Sigmoid colon (tissue), 7 donors: ENCODE measurements at regions of chr1 and their contacts with region 1.

Region 1: GRCh38 chr1:166975361-166976129 is at the start of gene ILDR2:
- DNase-seq: peak; percentile 81
- H3K4me3 ChIP-seq: peak within 1 kb of the TSS; percentile 70 to 86 (median 82)
- H3K27ac ChIP-seq: peak within 1 kb of the TSS; percentile 81 to 88 (median 86)
- H3K4me1 ChIP-seq: peaks cover 0 to 26% (median 15%) of the 10 kb centered on the region in 4 donors
- H3K27me3 ChIP-seq: no peaks in the 10 kb centered on the region
- CTCF ChIP-seq: no peak
- EP300 ChIP-seq: no peak
- POLR2A ChIP-seq: no peak
- total RNA-seq, gene ILDR2: 7.1 to 15.8 (median 8.4) TPM

Region 2: DNA sequence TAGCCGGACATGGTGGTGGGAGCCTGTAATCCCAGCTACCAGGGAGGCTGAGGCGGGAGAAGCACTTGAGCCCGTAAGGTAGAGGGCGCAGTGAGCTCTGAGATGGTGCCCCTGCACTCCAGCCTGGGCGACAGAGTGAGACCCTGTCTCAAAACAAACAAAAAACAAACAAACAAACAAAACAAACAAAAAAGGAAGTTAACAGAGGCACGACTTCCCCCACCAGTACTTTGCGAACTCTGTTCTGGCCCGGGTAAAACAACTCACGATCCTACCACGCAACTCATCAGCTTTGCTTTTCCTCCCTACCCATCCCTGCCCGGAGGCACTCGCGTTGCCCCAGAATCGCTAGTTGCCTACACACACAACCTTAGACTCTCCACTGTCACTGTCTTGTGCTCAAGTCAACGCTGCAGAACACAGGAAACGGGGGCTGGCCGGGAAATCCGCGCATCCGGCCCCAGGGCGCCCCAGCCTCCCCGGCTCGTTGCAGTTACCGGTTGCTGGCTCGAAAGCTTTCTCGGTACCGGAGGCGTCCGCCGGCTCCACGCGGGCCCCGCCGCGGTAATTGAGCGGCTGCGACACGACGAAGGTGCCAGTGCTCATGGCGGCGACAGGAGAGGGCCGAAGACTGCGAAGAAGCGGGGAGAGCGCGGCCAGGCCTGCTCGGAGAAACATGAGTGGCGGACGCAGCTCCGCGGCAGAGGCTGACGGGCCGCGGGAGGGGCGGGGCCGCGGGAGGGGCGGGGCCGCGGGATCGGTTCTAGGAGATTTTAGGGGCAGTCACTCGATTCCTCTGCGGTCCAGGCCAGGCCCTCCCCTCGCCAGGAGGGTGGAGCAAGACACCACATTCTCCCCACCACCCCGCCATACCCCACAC is 1277.4 kb before region 1 on chr1 and contains the start of gene ALDH9A1:
- intact Hi-C with region 1: loop called (anchors 5 kb)
- DNase-seq: peak; percentile 95
- H3K4me3 ChIP-seq: peak within 1 kb of the TSS; percentile 66 to 79 (median 70)
- H3K27ac ChIP-seq: peak within 1 kb of the TSS; percentile 91 to 97 (median 94)
- H3K4me1 ChIP-seq: peaks cover 0 to 32% (median 23%) of the 10 kb centered on the region in 4 donors
- H3K27me3 ChIP-seq: no peaks in the 10 kb centered on the region
- CTCF ChIP-seq: peak in 3 of 4 experiments; percentile 12 to 46 (median 36)
- EP300 ChIP-seq: no peak
- POLR2A ChIP-seq: peak; percentile 64 to 78
- total RNA-seq, gene ALDH9A1: 59.4 to 98.5 (median 86.9) TPM

Region 3: DNA sequence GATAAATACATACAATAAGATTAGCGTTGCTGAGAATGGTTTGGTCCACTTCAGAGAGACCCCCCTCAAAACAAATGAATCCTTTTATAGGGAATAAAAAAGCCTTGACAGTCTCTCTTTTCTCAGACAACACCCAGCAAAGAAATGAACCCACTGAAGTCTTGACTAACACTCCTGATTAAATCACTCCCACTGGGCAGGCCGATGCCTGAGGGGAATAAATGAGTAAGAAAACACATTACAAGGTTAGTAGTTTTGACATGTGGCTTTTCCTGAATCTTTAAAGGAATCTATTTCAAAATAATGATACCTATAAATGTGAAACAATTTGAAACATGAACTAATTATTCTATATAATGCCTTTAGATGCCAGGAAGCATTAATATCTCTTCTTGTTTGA is 283.2 kb before region 1 on chr1:
- intact Hi-C with region 1: no loop called
- DNase-seq: no peak
- H3K4me3 ChIP-seq: no peak overlapping the region
- H3K27ac ChIP-seq: no peak overlapping the region
- H3K4me1 ChIP-seq: no peaks in the 10 kb centered on the region
- H3K27me3 ChIP-seq: no peaks in the 10 kb centered on the region
- CTCF ChIP-seq: no peak
- EP300 ChIP-seq: no peak
- POLR2A ChIP-seq: no peak

Region 4: GRCh38 chr1:166910396-166910994 is 65.0 kb before region 1 on chr1:
- intact Hi-C with region 1: loop called (anchors 5 kb)
- DNase-seq: peak; percentile 76
- H3K4me3 ChIP-seq: no peak overlapping the region
- H3K27ac ChIP-seq: no peak overlapping the region
- H3K4me1 ChIP-seq: peaks cover 0 to 17% (median 12%) of the 10 kb centered on the region in 4 donors
- H3K27me3 ChIP-seq: no peaks in the 10 kb centered on the region
- CTCF ChIP-seq: peak; percentile 35 to 63 (median 48)
- EP300 ChIP-seq: no peak
- POLR2A ChIP-seq: no peak

Region 5: DNA sequence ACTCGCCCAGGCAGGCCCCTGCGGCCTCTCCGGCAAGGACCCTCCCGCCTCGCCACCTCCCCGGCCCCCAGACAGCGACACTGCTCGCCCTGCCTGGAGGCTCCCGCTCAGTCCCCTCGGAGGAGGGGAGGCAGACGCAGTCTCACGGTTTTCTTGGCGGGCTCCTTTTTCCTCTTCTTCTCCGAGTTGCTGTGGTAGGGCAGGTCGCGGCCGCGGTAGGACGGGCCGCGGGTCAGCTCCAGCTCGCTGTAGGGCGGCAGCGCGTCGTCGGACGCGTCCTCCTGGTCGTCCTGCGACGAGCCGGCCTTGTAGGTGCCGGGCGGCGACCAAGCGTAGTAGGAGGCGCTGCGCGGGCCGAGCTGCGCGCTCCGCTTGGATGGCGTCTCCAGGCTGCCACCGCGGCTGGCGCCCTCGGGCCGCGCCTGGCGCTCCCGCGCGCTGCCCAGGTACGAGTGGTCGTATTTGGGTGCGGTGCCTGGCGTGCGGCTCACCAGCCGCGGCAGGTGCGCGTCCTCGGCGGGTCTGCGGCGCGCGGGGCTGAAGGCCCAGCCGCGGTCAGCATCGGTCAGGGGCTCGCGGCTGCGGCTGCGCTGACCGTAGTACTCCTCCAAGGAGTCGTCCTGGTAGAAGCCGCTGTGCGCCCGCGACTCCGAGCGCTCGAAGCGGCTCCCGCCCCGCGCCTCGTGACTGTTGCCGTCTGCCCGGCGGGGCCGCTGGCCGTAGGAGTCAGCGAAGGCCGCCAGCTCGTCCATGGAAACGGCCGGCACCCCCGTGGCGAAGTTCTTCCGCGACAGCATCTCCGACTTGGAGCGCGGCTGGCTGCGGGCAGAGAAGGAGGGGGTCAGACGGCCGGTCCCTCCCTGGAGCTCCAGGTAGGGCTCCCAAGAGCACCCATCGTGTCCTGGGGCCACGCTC is 54.7 kb before region 1 on chr1:
- intact Hi-C with region 1: loop called (anchors 5 kb)
- DNase-seq: peak; percentile 63
- H3K4me3 ChIP-seq: peak overlapping the region; percentile 22 to 68 (median 59)
- H3K27ac ChIP-seq: peak overlapping the region; percentile 58 to 76 (median 65)
- H3K4me1 ChIP-seq: peaks cover 0 to 17% (median 10%) of the 10 kb centered on the region in 4 donors
- H3K27me3 ChIP-seq: peaks cover 0 to 11% (median 0%) of the 10 kb centered on the region in 3 donors
- CTCF ChIP-seq: no peak
- EP300 ChIP-seq: no peak
- POLR2A ChIP-seq: no peak

Region 6: DNA sequence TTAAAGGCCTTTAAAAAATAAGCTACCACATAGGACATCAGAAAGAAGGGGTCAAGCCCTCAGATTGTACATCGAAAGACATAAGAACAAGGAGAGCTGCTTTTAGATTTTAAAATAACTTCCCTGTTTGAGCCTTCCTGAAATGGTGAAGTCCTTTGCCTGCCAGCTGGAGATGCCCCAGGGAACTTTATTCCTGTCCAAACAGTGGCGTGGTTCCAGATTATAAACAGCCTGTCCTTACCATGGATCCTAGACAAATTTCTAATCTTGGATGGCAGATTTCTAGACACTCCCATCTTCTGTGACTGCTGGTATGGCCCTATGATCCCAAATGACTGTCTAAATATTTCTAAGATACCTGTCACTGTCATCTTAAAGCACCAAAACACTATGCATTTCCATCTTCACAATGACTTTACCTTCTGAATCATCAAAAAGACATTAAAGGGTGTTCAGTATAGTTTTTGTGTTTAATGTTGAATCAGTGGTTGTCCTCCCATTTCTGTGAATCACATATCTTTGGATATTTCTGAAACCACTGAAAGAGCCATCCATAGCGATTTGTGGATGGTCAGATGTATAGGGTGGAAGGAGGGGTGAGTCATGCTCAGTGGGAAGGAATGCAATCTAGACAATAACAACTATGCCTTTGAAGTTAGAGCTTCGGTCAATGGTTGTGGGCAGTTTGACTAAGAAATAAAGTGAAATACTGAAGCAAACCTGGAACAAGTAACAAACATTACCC is 23.4 kb before region 1 on chr1:
- intact Hi-C with region 1: loop called (anchors 2 kb)
- DNase-seq: peak; percentile 74
- H3K4me3 ChIP-seq: no peak overlapping the region
- H3K27ac ChIP-seq: peak overlapping the region; percentile 65 to 75 (median 71)
- H3K4me1 ChIP-seq: peaks cover 0 to 50% (median 32%) of the 10 kb centered on the region in 4 donors
- H3K27me3 ChIP-seq: no peaks in the 10 kb centered on the region
- CTCF ChIP-seq: no peak
- EP300 ChIP-seq: no peak
- POLR2A ChIP-seq: no peak

Region 7: GRCh38 chr1:167043752-167044488 is 68.4 kb after region 1 on chr1:
- intact Hi-C with region 1: loop called (anchors 2 kb)
- DNase-seq: peak; percentile 86
- H3K4me3 ChIP-seq: peak overlapping the region in 3 of 4 donors; percentile 45 to 46 (median 45)
- H3K27ac ChIP-seq: peak overlapping the region in 2 of 4 donors; percentile 32 to 35
- H3K4me1 ChIP-seq: peaks cover 0 to 11% (median 3%) of the 10 kb centered on the region in 4 donors
- H3K27me3 ChIP-seq: no peaks in the 10 kb centered on the region
- CTCF ChIP-seq: no peak
- EP300 ChIP-seq: no peak
- POLR2A ChIP-seq: no peak

Region 8: DNA sequence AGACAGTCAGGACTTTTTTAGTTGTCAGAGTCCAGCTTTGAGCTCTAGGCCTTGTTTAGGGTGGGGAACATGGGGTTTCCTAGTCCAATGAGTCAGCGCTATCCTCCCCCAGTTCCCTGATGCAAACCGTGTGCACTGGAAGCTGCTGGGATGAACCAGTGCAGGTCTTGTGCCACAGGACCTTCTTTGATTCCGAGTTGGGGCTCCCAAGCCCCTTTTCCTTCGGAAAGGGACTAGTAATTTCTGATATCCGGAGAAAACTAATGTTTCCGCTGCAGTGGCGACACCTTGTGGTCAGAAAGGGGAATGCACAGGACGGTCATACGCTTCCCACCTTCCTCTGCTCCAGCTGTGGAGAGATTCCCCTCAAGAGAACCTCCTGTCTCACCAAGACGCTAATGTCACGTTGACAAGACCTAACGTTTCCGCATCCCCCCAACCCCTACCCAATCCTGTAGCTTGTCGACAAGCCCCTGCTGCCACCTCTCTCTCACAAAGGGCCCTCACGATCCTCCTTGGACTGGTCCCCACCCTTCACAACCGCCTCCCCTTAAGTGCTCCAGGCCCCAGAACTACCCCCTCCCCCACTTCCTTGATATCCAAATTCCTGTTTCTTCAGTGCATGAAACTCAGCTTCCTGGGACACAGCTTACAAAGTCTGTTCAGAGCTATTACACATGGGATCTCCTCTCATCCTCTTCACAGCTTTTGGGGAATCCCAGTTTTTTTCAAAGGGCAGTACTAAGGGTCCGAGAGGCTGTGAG is 83.7 kb after region 1 on chr1:
- intact Hi-C with region 1: loop called (anchors 5 kb)
- DNase-seq: peak; percentile 85
- H3K4me3 ChIP-seq: no peak overlapping the region
- H3K27ac ChIP-seq: peak overlapping the region in 1 of 4 donors; percentile 13
- H3K4me1 ChIP-seq: peaks cover 0 to 7% (median 6%) of the 10 kb centered on the region in 4 donors
- H3K27me3 ChIP-seq: peaks cover 0 to 6% (median 0%) of the 10 kb centered on the region in 3 donors
- CTCF ChIP-seq: peak; percentile 82 to 97 (median 92)
- EP300 ChIP-seq: no peak
- POLR2A ChIP-seq: no peak